H1 (cell line): ENCODE measurements at regions of chr11 and their contacts with region 1.

Region 1: GRCh38 chr11:86608251-86608799 is 64.1 kb downstream of the ME3 start:
- DNase-seq: peak in 1 of 2 experiments; percentile 53
- H3K4me3 ChIP-seq: no peak overlapping the region
- H3K27ac ChIP-seq: no peak overlapping the region
- H3K4me1 ChIP-seq: peaks cover 0 to 12% (median 4%) of the 10 kb centered on the region in 4 experiments; a peak in 4 of 7 replicates
- H3K27me3 ChIP-seq: no peaks in the 10 kb centered on the region
- CTCF ChIP-seq: peak; percentile 63 to 88 (median 83)
- EP300 ChIP-seq: no peak
- POLR2A ChIP-seq: no peak
- RAD21 ChIP-seq: peak; percentile 50 to 52

Region 2: DNA sequence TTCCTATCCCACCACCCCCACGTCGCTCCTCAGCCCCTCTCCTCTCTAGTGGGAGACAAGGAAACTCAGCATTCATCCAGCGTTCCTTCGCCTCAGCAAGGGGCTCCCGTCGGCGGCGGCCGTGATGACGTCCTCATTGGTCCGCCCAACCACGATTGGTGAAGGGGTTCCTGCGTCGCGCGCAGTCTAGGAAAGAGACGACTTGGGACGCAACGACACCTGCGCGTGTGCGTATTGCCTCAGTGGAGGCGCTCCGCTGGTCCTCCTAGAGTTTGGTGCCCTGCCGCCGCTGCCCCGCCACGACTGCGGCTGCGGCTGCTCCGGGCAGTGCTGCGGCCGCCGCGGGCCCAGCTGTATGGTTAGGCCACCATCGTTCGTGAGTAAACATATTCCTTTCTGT is 177.1 kb before region 1 on chr11:
- CTCF ChIA-PET with region 1: no interaction called
- POLR2A ChIA-PET with region 1: no interaction called
- DNase-seq: no peak
- H3K4me3 ChIP-seq: no peak overlapping the region
- H3K27ac ChIP-seq: no peak overlapping the region
- H3K4me1 ChIP-seq: no peaks in the 10 kb centered on the region
- H3K27me3 ChIP-seq: no peaks in the 10 kb centered on the region
- CTCF ChIP-seq: no peak
- EP300 ChIP-seq: no peak
- POLR2A ChIP-seq: no peak
- RAD21 ChIP-seq: no peak

Region 3: DNA sequence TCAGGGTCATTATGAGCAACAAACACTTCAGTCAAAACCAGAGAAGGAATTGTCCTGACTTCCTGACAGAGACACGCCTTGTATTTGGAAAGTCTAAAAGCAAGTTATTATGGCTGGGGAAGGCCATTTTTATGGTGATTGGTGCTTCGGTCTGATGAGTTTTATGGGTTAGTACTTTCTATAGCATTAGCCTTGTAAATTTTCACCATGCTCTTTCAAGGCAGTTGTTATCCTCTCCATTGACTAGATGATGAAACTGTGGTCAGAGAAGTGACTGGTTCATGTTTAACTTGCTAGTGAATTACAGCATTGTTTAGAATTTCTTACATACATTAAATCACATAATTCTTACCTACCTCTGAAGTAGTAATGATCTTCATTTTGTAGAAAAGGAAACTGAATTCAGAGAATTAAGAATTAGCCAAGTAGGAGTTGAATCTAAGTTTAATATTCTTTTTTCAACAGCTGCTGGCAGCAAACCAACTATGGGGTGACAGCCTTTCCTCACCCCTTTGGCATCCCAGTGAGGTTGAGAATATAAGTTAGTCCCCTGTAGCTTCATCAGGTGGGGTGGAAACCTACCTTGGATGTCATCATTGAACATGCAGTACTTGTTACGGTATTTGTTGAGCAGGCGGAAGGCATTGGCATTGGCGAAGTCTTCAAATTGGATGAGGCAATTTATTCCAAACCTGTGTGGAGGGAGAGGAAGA is 143.7 kb before region 1 on chr11:
- CTCF ChIA-PET with region 1: interaction called, 23 read pairs
- POLR2A ChIA-PET with region 1: no interaction called
- DNase-seq: no peak
- H3K4me3 ChIP-seq: no peak overlapping the region
- H3K27ac ChIP-seq: no peak overlapping the region
- H3K4me1 ChIP-seq: no peaks in the 10 kb centered on the region; a peak in 1 of 7 replicates
- H3K27me3 ChIP-seq: no peaks in the 10 kb centered on the region
- CTCF ChIP-seq: no peak
- EP300 ChIP-seq: no peak
- POLR2A ChIP-seq: no peak
- RAD21 ChIP-seq: no peak

Region 4: GRCh38 chr11:86571273-86571948 is 36.9 kb before region 1 on chr11:
- CTCF ChIA-PET with region 1: interaction called, 27 read pairs
- POLR2A ChIA-PET with region 1: no interaction called
- DNase-seq: peak; percentile 76 to 87
- H3K4me3 ChIP-seq: no peak overlapping the region
- H3K27ac ChIP-seq: no peak overlapping the region
- H3K4me1 ChIP-seq: no peaks in the 10 kb centered on the region; a peak in 1 of 7 replicates
- H3K27me3 ChIP-seq: no peaks in the 10 kb centered on the region
- CTCF ChIP-seq: peak; percentile 82 to 99 (median 91)
- EP300 ChIP-seq: no peak
- POLR2A ChIP-seq: no peak
- RAD21 ChIP-seq: peak; percentile 67 to 81

Region 5: GRCh38 chr11:86592659-86593451 is 15.5 kb before region 1 on chr11:
- CTCF ChIA-PET with region 1: interaction called, 46 read pairs
- POLR2A ChIA-PET with region 1: no interaction called
- DNase-seq: no peak
- H3K4me3 ChIP-seq: no peak overlapping the region
- H3K27ac ChIP-seq: no peak overlapping the region
- H3K4me1 ChIP-seq: peaks cover 3 to 19% (median 15%) of the 10 kb centered on the region in 4 experiments; a peak in 6 of 7 replicates
- H3K27me3 ChIP-seq: peaks cover 0 to 2% (median 0%) of the 10 kb centered on the region in 4 experiments; a peak in 1 of 7 replicates
- CTCF ChIP-seq: no peak
- EP300 ChIP-seq: no peak
- POLR2A ChIP-seq: no peak
- RAD21 ChIP-seq: no peak

Region 6: DNA sequence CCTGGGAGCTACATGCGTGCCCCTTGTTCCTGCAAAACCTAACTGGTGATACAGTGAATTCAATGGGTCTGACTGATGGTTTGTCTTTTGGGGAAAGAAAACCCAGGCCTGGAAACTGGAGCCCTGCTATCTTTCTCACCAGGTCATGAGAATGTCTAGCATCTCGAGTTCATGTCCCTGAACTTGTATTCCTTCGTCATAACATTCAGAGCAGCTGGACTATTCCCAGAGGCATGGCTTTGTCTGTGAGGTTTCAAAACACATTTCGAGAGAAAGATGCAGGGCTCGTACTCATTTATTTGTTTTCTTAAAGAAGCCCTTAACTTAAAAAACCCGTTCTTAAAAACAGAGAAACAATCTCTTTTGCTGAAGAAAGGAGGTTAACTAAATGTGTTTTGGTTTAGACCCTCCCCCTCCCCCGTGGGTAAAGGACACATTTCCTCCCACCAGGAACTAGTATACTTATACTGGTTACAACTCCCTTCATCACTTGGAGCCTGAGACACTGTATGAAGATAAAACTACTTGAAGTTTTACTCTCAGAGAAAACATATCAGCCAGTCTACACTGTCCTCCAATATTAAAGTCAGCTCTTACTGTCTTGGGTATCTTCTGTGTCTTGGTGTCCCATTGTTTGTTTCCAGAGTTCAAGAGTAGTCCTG is 20.9 kb after region 1 on chr11:
- CTCF ChIA-PET with region 1: interaction called, 22 read pairs
- POLR2A ChIA-PET with region 1: no interaction called
- DNase-seq: no peak
- H3K4me3 ChIP-seq: no peak overlapping the region
- H3K27ac ChIP-seq: no peak overlapping the region
- H3K4me1 ChIP-seq: no peaks in the 10 kb centered on the region; a peak in 1 of 7 replicates
- H3K27me3 ChIP-seq: no peaks in the 10 kb centered on the region
- CTCF ChIP-seq: no peak
- EP300 ChIP-seq: no peak
- POLR2A ChIP-seq: no peak
- RAD21 ChIP-seq: no peak

Region 7: DNA sequence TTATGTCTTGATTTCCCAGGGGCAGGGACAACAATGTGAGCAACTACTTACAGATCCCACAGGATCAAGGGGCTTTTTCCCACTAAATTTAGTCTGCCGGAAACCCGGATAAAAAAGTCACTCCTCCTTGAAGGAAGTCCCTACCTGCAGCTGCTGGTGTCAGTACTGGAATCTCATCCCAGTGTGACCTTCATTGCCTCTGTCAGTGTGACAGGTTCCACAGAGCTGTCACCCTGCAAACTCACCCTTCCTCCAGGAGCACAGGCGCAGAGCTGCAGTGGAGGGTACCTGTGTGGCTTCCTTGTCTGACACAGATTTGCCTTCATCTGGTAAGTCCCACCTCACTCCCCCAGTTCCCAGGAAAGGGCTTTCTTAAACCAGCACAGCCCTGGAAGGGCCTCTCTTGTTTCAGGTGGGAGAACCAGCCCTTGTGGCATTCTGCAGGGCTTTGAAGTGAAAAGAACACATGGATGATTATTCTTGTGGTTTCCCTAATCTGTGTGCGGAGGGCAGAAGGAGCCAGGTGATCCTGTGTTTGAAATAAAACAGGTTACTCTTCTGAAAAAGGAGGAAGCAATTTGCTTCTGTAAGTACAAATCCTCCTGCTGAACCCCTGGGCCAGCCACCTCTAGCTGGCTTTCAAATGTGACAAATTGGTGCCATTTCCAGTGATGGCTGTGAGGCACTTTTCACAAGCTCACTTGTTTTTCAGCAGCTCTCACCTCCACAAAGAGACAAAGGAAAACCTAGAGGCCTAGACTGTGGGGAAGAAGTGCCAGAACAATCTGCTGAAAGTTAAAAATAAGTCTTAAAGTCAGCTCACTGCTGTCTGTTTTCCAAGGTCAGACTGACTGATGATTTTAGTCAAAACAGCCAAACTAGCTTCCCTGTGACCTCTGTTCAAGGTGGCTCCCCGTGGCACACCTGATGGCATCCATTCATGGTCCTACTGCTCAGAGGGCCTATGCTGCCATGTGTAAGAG is 182.8 kb after region 1 on chr11:
- CTCF ChIA-PET with region 1: interaction called, 11 read pairs
- POLR2A ChIA-PET with region 1: no interaction called
- DNase-seq: no peak
- H3K4me3 ChIP-seq: no peak overlapping the region
- H3K27ac ChIP-seq: no peak overlapping the region
- H3K4me1 ChIP-seq: no peaks in the 10 kb centered on the region
- H3K27me3 ChIP-seq: no peaks in the 10 kb centered on the region
- CTCF ChIP-seq: no peak
- EP300 ChIP-seq: no peak
- POLR2A ChIP-seq: no peak
- RAD21 ChIP-seq: no peak

Region 8: GRCh38 chr11:86811637-86812321 is 203.5 kb after region 1 on chr11:
- CTCF ChIA-PET with region 1: interaction called, 11 read pairs
- POLR2A ChIA-PET with region 1: no interaction called
- DNase-seq: no peak
- H3K4me3 ChIP-seq: no peak overlapping the region
- H3K27ac ChIP-seq: no peak overlapping the region
- H3K4me1 ChIP-seq: peaks cover 0 to 5% (median 1%) of the 10 kb centered on the region in 4 experiments; a peak in 1 of 7 replicates
- H3K27me3 ChIP-seq: no peaks in the 10 kb centered on the region
- CTCF ChIP-seq: no peak
- EP300 ChIP-seq: no peak
- POLR2A ChIP-seq: no peak
- RAD21 ChIP-seq: no peak